Heart left ventricle (tissue), 16 donors: ENCODE measurements at regions of chr1 and their contacts with region 1.

Region 1: GRCh38 chr1:109112652-109113285 is 1.1 kb upstream of the ELAPOR1 start:
- DNase-seq: peak; percentile 90 to 97 (median 94)
- ATAC-seq: peak; percentile 92 to 98 (median 96)
- H3K4me3 ChIP-seq: peak overlapping the region in 10 of 12 donors; percentile 4 to 54 (median 40)
- H3K27ac ChIP-seq: no peak overlapping the region
- H3K4me1 ChIP-seq: peaks cover 0 to 28% (median 18%) of the 10 kb centered on the region in 12 donors
- H3K27me3 ChIP-seq: peaks cover 0 to 42% (median 24%) of the 10 kb centered on the region in 9 donors
- CTCF ChIP-seq: peak; percentile 94 to 99 (median 98)
- POLR2A ChIP-seq: peak in 1 of 2 donors; percentile 13

Region 2: DNA sequence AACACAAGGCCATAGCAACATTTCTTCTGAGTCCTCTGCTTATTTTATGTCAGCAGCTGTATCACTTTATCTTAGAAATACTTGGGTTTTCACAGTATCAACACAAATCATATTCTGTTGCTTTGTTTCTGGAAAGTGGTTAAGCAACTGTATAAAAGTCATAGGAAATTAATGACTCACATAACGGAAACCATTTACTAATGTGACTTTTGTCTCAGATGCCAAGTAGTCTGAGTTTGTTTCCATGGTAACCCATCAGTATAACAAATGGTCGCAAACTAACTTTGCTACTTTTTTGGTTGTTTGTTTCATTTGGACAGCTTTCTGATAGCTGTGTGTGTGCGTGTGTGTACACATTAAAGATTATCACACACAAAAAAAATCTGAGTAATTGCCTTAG is 521.8 kb before region 1 on chr1:
- intact Hi-C with region 1: no loop called
- DNase-seq: peak in 1 of 5 donors; percentile 27
- ATAC-seq: peak; percentile 57 to 84 (median 79)
- H3K4me3 ChIP-seq: peak overlapping the region in 3 of 12 donors; percentile 1 to 27 (median 9)
- H3K27ac ChIP-seq: peak overlapping the region; percentile 10 to 88 (median 62)
- H3K4me1 ChIP-seq: peaks cover 0 to 51% (median 25%) of the 10 kb centered on the region in 12 donors
- H3K27me3 ChIP-seq: no peaks in the 10 kb centered on the region
- CTCF ChIP-seq: no peak
- POLR2A ChIP-seq: no peak

Region 3: DNA sequence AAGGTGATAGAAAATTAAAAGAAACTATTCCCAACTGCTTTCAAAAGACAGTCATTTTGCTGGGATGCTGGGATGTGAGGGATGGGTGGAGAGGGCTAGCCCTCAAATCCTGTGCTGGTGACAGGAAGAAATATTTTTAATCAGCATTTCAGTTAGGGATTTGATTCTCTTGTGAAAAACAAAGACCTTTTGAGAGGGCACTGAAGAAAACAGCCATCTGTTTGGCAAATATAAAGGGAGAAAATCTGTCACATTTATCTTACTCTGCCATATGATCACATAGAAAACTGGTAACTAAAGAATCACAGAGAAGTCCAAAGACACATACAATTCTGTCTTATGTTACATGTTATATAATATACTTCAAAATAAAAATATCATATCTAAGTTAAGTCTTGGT is 354.0 kb before region 1 on chr1:
- intact Hi-C with region 1: no loop called
- DNase-seq: no peak
- ATAC-seq: no peak
- H3K4me3 ChIP-seq: no peak overlapping the region
- H3K27ac ChIP-seq: no peak overlapping the region
- H3K4me1 ChIP-seq: no peaks in the 10 kb centered on the region
- H3K27me3 ChIP-seq: no peaks in the 10 kb centered on the region
- CTCF ChIP-seq: no peak
- POLR2A ChIP-seq: no peak

Region 4: GRCh38 chr1:108947871-108948525 is 164.8 kb before region 1 on chr1:
- intact Hi-C with region 1: loop called in 1 of 10 experiments (anchors 5 kb)
- DNase-seq: no peak
- ATAC-seq: peak in 3 of 4 donors; percentile 32 to 45 (median 36)
- H3K4me3 ChIP-seq: no peak overlapping the region
- H3K27ac ChIP-seq: no peak overlapping the region
- H3K4me1 ChIP-seq: peaks cover 0 to 14% (median 8%) of the 10 kb centered on the region in 12 donors
- H3K27me3 ChIP-seq: no peaks in the 10 kb centered on the region
- CTCF ChIP-seq: no peak
- POLR2A ChIP-seq: no peak

Region 5: GRCh38 chr1:109027841-109028240 is 84.9 kb before region 1 on chr1:
- intact Hi-C with region 1: loop called in 2 of 10 experiments (anchors 5 to 10 kb)
- DNase-seq: no peak
- ATAC-seq: no peak
- H3K4me3 ChIP-seq: no peak overlapping the region
- H3K27ac ChIP-seq: no peak overlapping the region
- H3K4me1 ChIP-seq: peaks cover 0 to 5% (median 0%) of the 10 kb centered on the region in 12 donors
- H3K27me3 ChIP-seq: no peaks in the 10 kb centered on the region
- CTCF ChIP-seq: peak in 3 of 12 donors; percentile 22 to 32 (median 26)
- POLR2A ChIP-seq: no peak

Region 6: GRCh38 chr1:109167001-109167506 is 54.3 kb after region 1 on chr1:
- intact Hi-C with region 1: no loop called
- DNase-seq: peak in 1 of 5 donors; percentile 25
- ATAC-seq: peak in 1 of 4 donors; percentile 71
- H3K4me3 ChIP-seq: no peak overlapping the region
- H3K27ac ChIP-seq: no peak overlapping the region
- H3K4me1 ChIP-seq: peaks cover 0 to 37% (median 6%) of the 10 kb centered on the region in 12 donors
- H3K27me3 ChIP-seq: no peaks in the 10 kb centered on the region
- CTCF ChIP-seq: no peak
- POLR2A ChIP-seq: no peak

Region 7: GRCh38 chr1:109193653-109194590 is 81.2 kb after region 1 on chr1:
- intact Hi-C with region 1: no loop called
- DNase-seq: no peak
- ATAC-seq: no peak
- H3K4me3 ChIP-seq: no peak overlapping the region
- H3K27ac ChIP-seq: no peak overlapping the region
- H3K4me1 ChIP-seq: peaks cover 0 to 14% (median 2%) of the 10 kb centered on the region in 12 donors
- H3K27me3 ChIP-seq: no peaks in the 10 kb centered on the region
- CTCF ChIP-seq: peak in 11 of 12 donors; percentile 13 to 44 (median 33)
- POLR2A ChIP-seq: no peak

Region 8: DNA sequence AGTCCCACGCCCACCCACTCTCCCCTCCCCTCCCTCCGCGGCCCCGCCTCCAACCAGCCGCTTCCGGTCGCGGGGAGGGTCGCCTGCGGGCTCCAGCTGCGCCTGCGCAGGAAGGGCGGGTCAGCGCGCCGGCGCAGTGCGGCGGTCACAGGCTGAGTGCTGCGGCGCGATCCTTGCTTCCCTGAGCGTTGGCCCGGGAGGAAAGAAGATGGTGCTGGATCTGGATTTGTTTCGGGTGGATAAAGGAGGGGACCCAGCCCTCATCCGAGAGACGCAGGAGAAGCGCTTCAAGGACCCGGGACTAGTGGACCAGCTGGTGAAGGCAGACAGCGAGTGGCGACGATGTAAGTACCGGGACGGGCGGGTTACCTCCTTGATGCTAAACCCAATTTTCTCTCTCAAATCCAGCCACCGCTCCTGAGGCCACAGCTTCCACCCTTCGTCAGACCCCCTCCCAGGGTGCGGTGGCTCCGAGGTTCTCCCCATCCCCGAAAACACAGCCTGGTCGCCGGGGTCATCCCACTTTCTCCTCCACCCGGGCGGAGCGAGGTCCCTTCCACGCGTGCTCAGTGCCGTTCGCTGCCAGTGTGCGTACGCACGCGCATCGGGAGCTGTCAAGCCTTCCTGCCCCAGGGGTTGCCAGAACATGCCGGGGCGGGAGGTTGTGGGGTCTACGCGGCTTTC is 101.2 kb after region 1 on chr1 and contains the start of gene SARS1:
- intact Hi-C with region 1: loop called in 1 of 10 experiments (anchors 5 kb)
- DNase-seq: peak; percentile 87 to 95 (median 90)
- ATAC-seq: peak; percentile 94 to 97 (median 96)
- H3K4me3 ChIP-seq: peak within 1 kb of the TSS; percentile 40 to 99 (median 90)
- H3K27ac ChIP-seq: peak within 1 kb of the TSS; percentile 77 to 96 (median 91)
- H3K4me1 ChIP-seq: peaks cover 0 to 43% (median 24%) of the 10 kb centered on the region in 12 donors
- H3K27me3 ChIP-seq: no peaks in the 10 kb centered on the region
- CTCF ChIP-seq: peak in 1 of 12 donors; percentile 6
- POLR2A ChIP-seq: peak in 1 of 2 donors; percentile 88
- total RNA-seq, gene SARS1: 88.5 to 113 (median 102) TPM